ENCODE measurements at regions of chr4 and their contacts with region 1.

Region 1: GRCh38 chr4:94621491-94622080 is 136.2 kb upstream of the BMPR1B start:
- DNase-seq: peak in 4 of 14 experiments; percentile 16 to 60 (median 49)
- ATAC-seq: no peak
- H3K4me3 ChIP-seq: no peak overlapping the region
- H3K4me3 Mint-ChIP-seq: no peak overlapping the region
- H3K27ac ChIP-seq: no peak overlapping the region
- H3K27ac Mint-ChIP-seq: no peak overlapping the region
- H3K4me1 ChIP-seq: no peaks in the 10 kb centered on the region
- H3K4me1 Mint-ChIP-seq: no peaks in the 10 kb centered on the region
- H3K27me3 ChIP-seq: no peaks in the 10 kb centered on the region
- H3K27me3 Mint-ChIP-seq: no peaks in the 10 kb centered on the region
- CTCF ChIP-seq: peak; percentile 76

Region 2: DNA sequence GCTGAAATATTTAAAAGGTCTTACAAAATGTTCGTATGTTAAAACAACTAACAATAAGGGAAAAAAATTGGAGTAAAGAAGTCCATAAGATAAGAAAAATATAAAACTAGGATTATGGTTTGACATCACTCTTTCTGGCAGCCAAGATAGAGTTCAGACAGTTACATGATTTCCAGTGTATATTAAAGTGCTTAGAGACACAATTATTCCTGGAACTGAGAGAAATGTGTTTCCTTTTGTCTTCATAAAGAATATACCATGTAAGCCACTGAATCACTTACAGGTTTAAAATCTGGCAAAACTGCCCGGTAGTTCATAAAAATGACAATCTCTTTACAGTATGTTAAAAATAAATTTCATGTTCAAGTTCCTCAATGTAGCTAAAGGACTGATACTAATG is 1331.8 kb before region 1 on chr4:
- CTCF ChIA-PET with region 1: no interaction called
- POLR2A ChIA-PET with region 1: no interaction called
- intact Hi-C with region 1: no loop called
- DNase-seq: no peak
- ATAC-seq: no peak
- H3K4me3 ChIP-seq: no peak overlapping the region
- H3K4me3 Mint-ChIP-seq: no peak overlapping the region
- H3K27ac ChIP-seq: no peak overlapping the region
- H3K27ac Mint-ChIP-seq: no peak overlapping the region
- H3K4me1 ChIP-seq: no peaks in the 10 kb centered on the region
- H3K4me1 Mint-ChIP-seq: no peaks in the 10 kb centered on the region
- H3K27me3 ChIP-seq: no peaks in the 10 kb centered on the region
- H3K27me3 Mint-ChIP-seq: no peaks in the 10 kb centered on the region
- CTCF ChIP-seq: no peak

Region 3: GRCh38 chr4:94332983-94333590 is 288.5 kb before region 1 on chr4:
- CTCF ChIA-PET with region 1: no interaction called
- POLR2A ChIA-PET with region 1: no interaction called
- intact Hi-C with region 1: no loop called
- DNase-seq: no peak
- ATAC-seq: no peak
- H3K4me3 ChIP-seq: no peak overlapping the region
- H3K4me3 Mint-ChIP-seq: no peak overlapping the region
- H3K27ac ChIP-seq: no peak overlapping the region
- H3K27ac Mint-ChIP-seq: no peak overlapping the region
- H3K4me1 ChIP-seq: no peaks in the 10 kb centered on the region
- H3K4me1 Mint-ChIP-seq: no peaks in the 10 kb centered on the region
- H3K27me3 ChIP-seq: no peaks in the 10 kb centered on the region
- H3K27me3 Mint-ChIP-seq: no peaks in the 10 kb centered on the region
- CTCF ChIP-seq: no peak

Region 4: GRCh38 chr4:95095348-95095974 is 473.9 kb after region 1 on chr4:
- CTCF ChIA-PET with region 1: no interaction called
- POLR2A ChIA-PET with region 1: no interaction called
- intact Hi-C with region 1: loop called (anchors 2 to 5 kb)
- DNase-seq: peak in 1 of 14 experiments; percentile 13
- ATAC-seq: no peak
- H3K4me3 ChIP-seq: no peak overlapping the region
- H3K4me3 Mint-ChIP-seq: no peak overlapping the region
- H3K27ac ChIP-seq: no peak overlapping the region
- H3K27ac Mint-ChIP-seq: no peak overlapping the region
- H3K4me1 ChIP-seq: no peaks in the 10 kb centered on the region
- H3K4me1 Mint-ChIP-seq: peaks cover 17% of the 10 kb centered on the region
- H3K27me3 ChIP-seq: no peaks in the 10 kb centered on the region
- H3K27me3 Mint-ChIP-seq: no peaks in the 10 kb centered on the region
- CTCF ChIP-seq: peak; percentile 17